Activated CD4-positive, alpha-beta T cell treated with anti-CD3 and anti-CD28 coated beads, Interleukin-2, amount 10 ng/mL, durations not matched to agents 24 days and 14 days (primary cell): ENCODE measurements at regions of chr6 and their contacts with region 1.

Region 1: GRCh38 chr6:7238900-7239589 is 74.0 kb downstream of the SSR1 start:
- DNase-seq: peak; percentile 90
- H3K4me3 Mint-ChIP-seq: no peak overlapping the region
- H3K27ac Mint-ChIP-seq: no peak overlapping the region
- H3K4me1 Mint-ChIP-seq: peaks cover 17% of the 10 kb centered on the region
- H3K27me3 Mint-ChIP-seq: no peaks in the 10 kb centered on the region

Region 2: DNA sequence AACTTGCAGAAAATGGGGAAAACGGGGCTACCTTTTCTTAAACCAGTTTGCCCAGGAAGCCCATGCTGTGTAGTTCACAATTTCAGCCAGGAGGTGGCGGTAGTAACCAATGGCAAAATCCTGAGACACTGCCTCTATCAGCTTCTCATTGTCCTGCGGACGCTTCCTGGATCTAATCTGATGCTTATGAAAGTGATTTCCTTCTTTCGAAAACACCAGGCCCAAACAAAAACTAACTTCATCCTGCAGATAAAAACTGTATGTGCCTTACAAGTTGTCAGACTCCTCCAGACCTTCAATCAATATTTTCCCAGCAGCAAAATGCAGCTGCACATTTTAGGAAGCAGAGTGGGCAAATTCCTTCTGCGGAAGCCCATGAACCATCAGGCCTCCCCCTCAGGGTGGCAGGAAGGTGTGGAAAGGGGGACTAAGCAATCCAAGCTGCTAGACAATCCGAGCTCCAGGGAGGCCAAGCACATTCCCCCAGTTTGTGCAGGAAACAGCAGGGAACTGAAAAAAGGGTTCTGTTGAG is 562.1 kb before region 1 on chr6:
- intact Hi-C with region 1: loop called (anchors 1 kb)
- DNase-seq: peak; percentile 95
- H3K4me3 Mint-ChIP-seq: peak overlapping the region; percentile 8
- H3K27ac Mint-ChIP-seq: no peak overlapping the region
- H3K4me1 Mint-ChIP-seq: peaks cover 29% of the 10 kb centered on the region
- H3K27me3 Mint-ChIP-seq: peaks cover 2% of the 10 kb centered on the region

Region 3: GRCh38 chr6:6724539-6725467 is 514.2 kb before region 1 on chr6:
- intact Hi-C with region 1: loop called (anchors 2 kb)
- DNase-seq: peak; percentile 86
- H3K4me3 Mint-ChIP-seq: peak overlapping the region; percentile 49
- H3K27ac Mint-ChIP-seq: no peak overlapping the region
- H3K4me1 Mint-ChIP-seq: peaks cover 19% of the 10 kb centered on the region
- H3K27me3 Mint-ChIP-seq: peaks cover 31% of the 10 kb centered on the region

Region 4: DNA sequence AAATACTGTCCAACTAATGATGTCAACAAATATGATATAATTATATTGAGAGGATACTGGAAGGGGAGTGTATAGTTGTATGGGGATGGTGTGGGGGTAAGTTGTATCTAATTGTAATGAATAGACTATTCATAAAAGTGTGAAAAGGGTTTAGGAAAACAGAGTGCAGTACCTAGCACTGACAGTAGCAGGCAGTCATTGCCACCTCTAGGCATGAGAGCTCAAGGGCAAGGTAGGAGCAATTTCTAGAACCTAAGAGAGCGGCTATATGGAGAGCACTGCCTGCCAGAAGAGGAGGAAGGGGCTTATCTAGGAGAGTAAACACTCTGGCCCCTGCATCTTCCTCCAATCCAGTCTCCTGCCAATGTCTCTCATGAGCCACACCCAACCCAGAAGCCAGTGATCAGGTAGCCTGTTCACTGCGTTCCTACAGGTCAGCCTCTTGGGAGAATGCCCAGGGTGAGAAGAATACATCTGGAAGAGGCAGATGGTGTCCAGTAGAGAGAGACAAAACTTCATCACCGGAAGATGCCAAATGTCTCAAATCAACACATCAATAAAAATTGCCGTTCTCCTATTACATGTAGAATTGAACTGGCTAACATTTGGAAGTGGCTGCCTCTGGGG is 450.5 kb before region 1 on chr6:
- intact Hi-C with region 1: loop called (anchors 5 kb)
- DNase-seq: peak; percentile 67
- H3K4me3 Mint-ChIP-seq: no peak overlapping the region
- H3K27ac Mint-ChIP-seq: no peak overlapping the region
- H3K4me1 Mint-ChIP-seq: peaks cover 19% of the 10 kb centered on the region
- H3K27me3 Mint-ChIP-seq: peaks cover 10% of the 10 kb centered on the region

Region 5: DNA sequence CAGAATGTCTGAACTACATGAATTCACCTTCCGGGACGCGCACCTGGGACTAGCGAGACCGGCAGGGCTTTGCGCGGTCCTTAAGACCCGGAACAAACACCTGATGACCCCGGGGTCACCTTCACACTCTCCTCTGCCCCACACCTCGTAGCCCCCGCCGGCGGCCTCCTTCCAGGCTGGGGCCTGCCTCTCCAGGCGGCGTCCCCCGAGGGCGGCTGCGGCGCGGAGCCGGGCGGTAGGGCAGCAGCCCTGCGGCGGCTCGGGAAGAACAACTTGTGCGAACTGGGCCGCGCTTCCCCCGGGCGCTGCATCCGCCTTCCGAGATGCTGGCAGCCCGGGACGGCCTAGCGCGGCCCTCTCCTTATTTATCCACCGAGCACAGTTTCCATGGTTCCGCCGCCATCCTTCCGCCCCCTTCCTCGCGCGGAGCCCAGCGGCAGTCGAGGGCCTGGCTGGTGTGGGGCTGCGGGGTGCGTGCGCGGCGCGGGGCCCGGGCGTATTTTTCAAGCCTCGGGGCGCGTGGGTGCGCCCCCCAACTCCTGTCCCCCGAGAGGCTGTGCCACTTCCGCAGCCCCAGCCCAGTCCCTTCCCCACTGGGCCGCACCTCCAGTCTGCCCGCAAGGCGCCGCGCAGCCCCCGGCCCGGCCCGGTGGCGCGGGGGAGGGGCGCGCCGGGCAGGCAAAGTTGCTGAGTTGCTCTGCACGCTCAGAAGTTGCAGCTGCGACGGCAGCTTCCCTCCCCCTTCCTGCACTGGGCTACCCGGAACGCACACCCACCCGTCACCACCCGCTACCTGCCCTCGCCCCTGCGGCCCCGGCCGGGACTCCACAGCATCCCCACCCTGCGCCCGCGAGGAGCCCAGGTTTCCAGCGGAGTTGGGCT is 187.6 kb before region 1 on chr6:
- intact Hi-C with region 1: loop called (anchors 5 kb)
- DNase-seq: peak; percentile 75
- H3K4me3 Mint-ChIP-seq: peak overlapping the region; percentile 26
- H3K27ac Mint-ChIP-seq: no peak overlapping the region
- H3K4me1 Mint-ChIP-seq: peaks cover 5% of the 10 kb centered on the region
- H3K27me3 Mint-ChIP-seq: peaks cover 56% of the 10 kb centered on the region

Region 6: DNA sequence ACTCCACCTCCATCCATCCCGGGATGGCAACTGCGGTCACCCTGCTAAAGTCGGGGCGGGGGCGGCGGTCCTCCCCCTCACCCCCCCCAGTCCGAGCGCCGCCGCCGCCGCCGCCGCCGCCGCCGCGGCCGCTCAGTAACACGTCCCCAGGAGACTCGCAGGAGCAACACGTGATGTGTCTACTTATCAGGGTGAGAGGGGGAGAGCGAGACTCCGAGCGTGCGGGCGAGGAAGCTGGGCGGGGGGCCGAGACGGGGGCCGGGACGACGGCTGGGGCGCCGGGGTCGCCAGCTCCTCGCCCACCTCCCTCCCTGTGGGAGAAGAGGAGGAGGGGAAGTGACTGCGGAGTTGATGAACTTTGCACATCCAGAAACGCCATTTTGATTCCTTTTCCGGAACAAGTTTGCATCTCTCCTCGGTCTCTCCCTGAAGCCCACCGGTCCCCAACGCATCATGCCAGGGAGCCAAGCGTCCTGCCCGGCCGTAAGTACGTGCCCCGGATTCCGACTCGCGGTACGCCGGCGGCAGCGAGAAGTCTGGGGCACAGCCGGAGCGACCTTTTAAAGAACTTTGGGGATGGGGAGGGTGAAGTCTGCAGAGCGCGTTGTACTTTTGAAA is 131.4 kb before region 1 on chr6 and contains the start of gene RREB1:
- intact Hi-C with region 1: loop called (anchors 2 kb)
- DNase-seq: peak; percentile 86
- H3K4me3 Mint-ChIP-seq: peak within 1 kb of the TSS; percentile 96
- H3K27ac Mint-ChIP-seq: peak within 1 kb of the TSS; percentile 96
- H3K4me1 Mint-ChIP-seq: peaks cover 33% of the 10 kb centered on the region
- H3K27me3 Mint-ChIP-seq: peaks cover 8% of the 10 kb centered on the region
- total RNA-seq, gene RREB1: 13.9 and 16.8 TPM in 2 replicates